Activated B cell treated with CpG ODN at 0.5 μM for 24 hours (primary cell): ENCODE measurements at regions of chr7 and their contacts with region 1.

Region 1: GRCh38 chr7:150448789-150449147 is 1.7 kb upstream of the GIMAP8 start:
- DNase-seq: peak; percentile 55
- ATAC-seq: peak; percentile 86
- H3K4me3 Mint-ChIP-seq: peak overlapping the region; percentile 9
- H3K27ac Mint-ChIP-seq: no peak overlapping the region
- H3K4me1 Mint-ChIP-seq: peaks cover 41% of the 10 kb centered on the region
- H3K27me3 Mint-ChIP-seq: peaks cover 7% of the 10 kb centered on the region
- CTCF ChIP-seq: peak; percentile 91

Region 2: GRCh38 chr7:150685219-150686029 is 236.7 kb after region 1 on chr7 and contains the start of gene GIMAP2:
- CTCF ChIA-PET with region 1: no interaction called
- POLR2A ChIA-PET with region 1: no interaction called
- intact Hi-C with region 1: loop called (anchors 10 kb)
- DNase-seq: no peak
- ATAC-seq: peak; percentile 88
- H3K4me3 Mint-ChIP-seq: peak within 1 kb of the TSS; percentile 89
- H3K27ac Mint-ChIP-seq: peak within 1 kb of the TSS; percentile 84
- H3K4me1 Mint-ChIP-seq: peaks cover 28% of the 10 kb centered on the region
- H3K27me3 Mint-ChIP-seq: no peaks in the 10 kb centered on the region
- CTCF ChIP-seq: no peak
- total RNA-seq, gene GIMAP2: 19.5 and 21.7 TPM in 2 replicates

Region 3: GRCh38 chr7:150753826-150754603 is 305.2 kb after region 1 on chr7:
- CTCF ChIA-PET with region 1: interaction called, 4 read pairs
- POLR2A ChIA-PET with region 1: no interaction called
- intact Hi-C with region 1: loop called (anchors 1 kb)
- DNase-seq: no peak
- ATAC-seq: no peak
- H3K4me3 Mint-ChIP-seq: no peak overlapping the region
- H3K27ac Mint-ChIP-seq: no peak overlapping the region
- H3K4me1 Mint-ChIP-seq: peaks cover 4% of the 10 kb centered on the region
- H3K27me3 Mint-ChIP-seq: peaks cover 11% of the 10 kb centered on the region
- CTCF ChIP-seq: no peak

Region 4: DNA sequence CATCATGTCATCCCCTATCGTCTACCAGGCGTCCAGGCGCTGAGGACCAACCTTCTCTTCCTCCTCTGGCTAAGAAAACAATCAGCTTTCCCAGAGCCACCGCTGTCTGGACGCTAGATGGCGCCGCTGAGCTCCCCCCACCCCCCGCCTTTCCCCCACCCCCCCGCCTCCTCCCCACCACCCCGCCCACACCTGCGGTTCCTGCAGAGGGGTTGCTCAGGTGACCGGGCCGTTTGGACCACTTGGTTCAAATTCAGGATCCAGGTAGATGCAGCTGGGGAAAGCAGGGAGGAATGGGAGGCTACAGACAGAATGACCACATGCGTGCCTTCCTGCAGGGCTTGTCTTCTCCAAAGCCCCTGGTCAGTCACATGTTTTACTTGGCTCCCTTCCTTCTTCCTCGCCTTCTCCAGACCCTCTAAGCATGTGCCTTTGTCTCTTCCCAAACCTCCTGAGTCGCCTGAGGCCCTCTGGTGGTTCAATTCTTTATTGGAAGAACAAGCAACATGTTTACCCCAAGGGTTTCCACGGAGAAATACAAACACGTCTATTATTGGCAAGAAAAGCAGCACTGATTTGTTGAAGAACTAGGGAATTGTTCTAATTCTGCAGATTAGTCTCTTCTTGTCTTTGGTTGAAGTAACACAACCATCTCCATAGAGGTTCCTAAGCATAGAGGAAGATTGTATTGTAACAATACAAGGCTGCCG is 428.2 kb after region 1 on chr7:
- CTCF ChIA-PET with region 1: no interaction called
- POLR2A ChIA-PET with region 1: no interaction called
- intact Hi-C with region 1: loop called (anchors 2 kb)
- DNase-seq: no peak
- ATAC-seq: peak; percentile 21
- H3K4me3 Mint-ChIP-seq: no peak overlapping the region
- H3K27ac Mint-ChIP-seq: no peak overlapping the region
- H3K4me1 Mint-ChIP-seq: peaks cover 6% of the 10 kb centered on the region
- H3K27me3 Mint-ChIP-seq: peaks cover 11% of the 10 kb centered on the region
- CTCF ChIP-seq: no peak